Right ventricle myocardium inferior (tissue), 1 donor: ENCODE measurements at regions of chr20 and their contacts with region 1.

Region 1: DNA sequence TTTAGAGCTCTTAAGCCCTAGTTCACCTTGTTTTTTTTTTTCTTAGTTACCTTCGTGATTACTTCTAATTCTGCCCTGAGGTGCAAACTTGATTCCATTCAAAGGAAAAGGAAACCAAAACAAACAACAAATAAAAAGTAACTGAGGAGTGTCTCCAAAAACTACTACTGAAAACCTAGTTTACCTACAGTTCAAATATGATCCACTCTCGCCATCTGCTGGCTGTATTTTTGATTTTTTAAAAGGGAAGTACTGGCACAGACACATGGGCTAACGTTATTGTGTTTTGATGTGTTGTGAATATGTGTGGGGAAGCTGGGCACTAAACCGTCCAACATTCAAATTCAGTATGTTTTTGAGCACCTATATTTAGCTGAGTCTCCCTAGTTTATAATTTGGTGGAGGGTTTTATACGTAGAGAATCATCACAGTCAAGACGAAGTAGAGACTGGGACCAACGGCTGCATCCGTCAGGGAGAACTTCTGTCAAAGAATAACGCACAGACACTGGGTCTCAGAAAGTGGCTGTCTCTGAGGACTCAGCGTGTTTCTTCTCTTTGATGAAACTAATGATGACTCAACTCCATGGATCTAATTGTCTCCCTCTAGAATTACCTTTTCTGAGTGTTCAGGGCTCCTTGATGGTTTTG is 373.5 kb upstream of the BTBD3 start:
- DNase-seq: no peak
- ATAC-seq: no peak

Region 2: DNA sequence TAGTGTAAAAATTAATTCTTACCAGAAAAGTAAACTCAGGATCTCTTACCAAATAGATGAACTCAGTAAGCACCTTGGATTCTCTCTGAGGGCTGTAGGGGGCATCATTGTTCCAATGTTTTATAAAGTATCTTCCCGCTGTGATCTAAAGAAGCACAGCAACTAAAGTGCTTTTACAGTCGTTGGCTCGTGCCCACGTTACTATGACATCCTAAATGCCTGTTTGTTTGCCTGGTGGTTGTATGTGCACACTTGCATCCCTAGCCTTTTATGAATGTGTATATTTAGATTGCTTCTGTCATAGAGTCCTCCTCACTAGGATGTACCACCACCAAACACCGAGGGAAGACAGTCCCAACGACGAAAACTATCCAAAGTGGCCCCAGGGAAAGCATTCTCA is 1074.6 kb before region 1 on chr20:
- intact Hi-C with region 1: loop called (anchors 10 kb)
- DNase-seq: no peak
- ATAC-seq: peak; percentile 74

Region 3: GRCh38 chr20:11323816-11324215 is 220.3 kb before region 1 on chr20:
- intact Hi-C with region 1: no loop called
- DNase-seq: no peak
- ATAC-seq: no peak